ENCODE measurements at regions of chr17 and their contacts with region 1.

Region 1: GRCh38 chr17:47315451-47316266 is 8.1 kb upstream of the EFCAB13 start:
- DNase-seq: peak; percentile 67
- CTCF ChIP-seq: peak; percentile 89

Region 2: DNA sequence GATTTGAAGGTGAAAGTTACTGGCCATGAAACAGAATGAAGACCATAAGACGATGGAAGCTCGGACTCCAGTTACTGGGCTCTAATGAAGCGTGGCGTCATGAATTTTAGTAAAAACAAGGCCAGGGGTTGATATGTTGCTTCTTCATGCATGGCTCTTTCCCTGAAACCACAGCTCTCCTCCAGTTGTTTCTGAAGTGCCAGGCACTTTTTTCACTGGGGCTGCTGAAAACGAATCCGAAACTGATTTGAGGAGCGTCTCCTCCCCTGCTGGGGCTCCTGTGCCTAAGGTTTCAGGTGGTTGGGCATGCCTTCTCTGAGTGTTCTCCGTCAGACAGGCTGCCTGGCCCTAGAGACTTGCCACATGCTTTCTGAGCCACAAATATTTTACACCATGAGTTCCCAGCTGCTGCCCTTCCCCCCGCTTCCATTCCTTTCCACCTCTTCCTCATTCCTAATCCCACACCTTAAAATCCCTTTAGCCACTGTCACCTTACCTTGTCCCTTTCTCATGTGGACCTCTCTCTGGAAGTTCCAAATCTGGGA is 110.2 kb before region 1 on chr17:
- CTCF ChIA-PET with region 1: interaction called, 43 read pairs
- POLR2A ChIA-PET with region 1: no interaction called
- DNase-seq: peak; percentile 59
- CTCF ChIP-seq: no peak

Region 3: DNA sequence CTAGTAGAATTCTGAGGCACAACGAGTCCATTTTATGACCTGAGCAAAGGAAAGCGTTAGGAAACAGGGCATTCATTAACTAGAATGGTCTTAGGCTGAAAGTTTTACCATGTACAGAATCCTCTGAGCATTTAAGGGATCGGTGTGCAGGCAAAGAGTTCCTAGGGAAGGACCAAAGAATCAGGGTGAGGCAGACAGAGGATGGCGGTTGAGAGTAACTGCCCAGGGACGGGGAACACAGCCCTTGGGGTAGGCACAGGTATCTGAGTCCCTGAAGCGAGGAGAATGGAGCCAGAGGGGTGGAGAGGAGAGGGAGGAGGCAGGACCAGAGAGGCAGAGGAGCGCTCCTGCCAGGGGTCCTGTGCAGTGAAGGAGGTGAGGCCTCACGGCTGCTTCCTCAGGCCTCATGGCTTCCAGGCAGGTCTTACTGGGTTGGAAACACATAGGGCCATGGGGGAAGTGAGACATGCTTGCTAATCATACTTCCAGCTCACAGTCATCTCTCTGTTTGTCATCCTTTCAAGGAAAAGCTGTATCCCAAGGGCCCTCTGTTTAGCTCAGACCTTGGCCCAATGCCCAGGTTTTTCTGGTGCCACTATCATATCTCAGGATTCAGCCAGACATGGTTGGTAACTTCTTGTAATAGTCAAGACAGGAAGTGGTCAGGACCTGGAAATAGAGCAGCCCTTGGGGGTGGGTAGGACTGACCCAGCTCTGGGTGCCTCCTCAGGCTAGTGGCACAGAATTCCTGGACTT is 75.9 kb before region 1 on chr17:
- CTCF ChIA-PET with region 1: interaction called, 27 read pairs
- POLR2A ChIA-PET with region 1: no interaction called
- DNase-seq: no peak
- CTCF ChIP-seq: no peak

Region 4: GRCh38 chr17:47286198-47286914 is 29.3 kb before region 1 on chr17:
- CTCF ChIA-PET with region 1: interaction called, 42 read pairs
- POLR2A ChIA-PET with region 1: no interaction called
- DNase-seq: peak; percentile 71
- CTCF ChIP-seq: no peak